ENCODE measurements at regions of chr17 and their contacts with region 1.

Region 1: GRCh38 chr17:56819431-56820145 is 14.1 kb downstream of the C17orf67 start:
- DNase-seq: peak; percentile 83
- H3K4me3 Mint-ChIP-seq: no peak overlapping the region
- H3K27ac Mint-ChIP-seq: no peak overlapping the region
- H3K4me1 Mint-ChIP-seq: peaks cover 27% of the 10 kb centered on the region
- H3K27me3 Mint-ChIP-seq: no peaks in the 10 kb centered on the region

Region 2: GRCh38 chr17:56715613-56716357 is 103.8 kb before region 1 on chr17:
- CTCF ChIA-PET with region 1: no interaction called
- POLR2A ChIA-PET with region 1: no interaction called
- intact Hi-C with region 1: no loop called
- DNase-seq: peak; percentile 83
- H3K4me3 Mint-ChIP-seq: no peak overlapping the region
- H3K27ac Mint-ChIP-seq: no peak overlapping the region
- H3K4me1 Mint-ChIP-seq: peaks cover 3% of the 10 kb centered on the region
- H3K27me3 Mint-ChIP-seq: peaks cover 5% of the 10 kb centered on the region

Region 3: DNA sequence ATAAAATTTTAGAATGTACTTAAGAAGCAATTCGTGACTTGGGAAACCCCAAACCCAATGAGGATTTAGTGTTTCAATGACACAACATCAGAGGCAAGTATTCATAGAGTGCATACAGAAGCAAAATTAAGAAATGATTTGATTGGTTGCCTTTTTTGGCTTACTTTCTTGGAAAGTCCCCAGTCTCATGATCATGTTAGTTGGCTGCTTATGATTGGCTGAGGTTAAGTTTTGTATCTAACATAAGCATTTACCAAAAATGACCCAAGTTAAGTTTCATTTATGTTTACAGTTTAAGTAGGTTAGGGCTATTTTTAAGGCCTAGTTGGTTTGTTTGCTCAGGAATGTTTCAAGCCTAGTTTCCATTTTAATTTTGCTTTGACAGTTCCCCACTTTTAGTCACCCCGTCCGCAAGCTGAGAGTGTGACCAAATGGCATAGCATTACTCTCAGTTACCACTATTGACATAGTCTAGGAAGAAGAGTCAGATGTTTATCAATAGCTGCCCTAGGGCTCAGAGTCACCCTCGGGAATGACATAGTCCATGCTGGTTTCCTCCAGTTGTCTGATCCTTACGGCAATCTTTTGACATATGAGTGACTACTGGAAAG is 50.6 kb after region 1 on chr17:
- CTCF ChIA-PET with region 1: interaction called, 11 read pairs
- POLR2A ChIA-PET with region 1: no interaction called
- intact Hi-C with region 1: no loop called
- DNase-seq: peak; percentile 45
- H3K4me3 Mint-ChIP-seq: no peak overlapping the region
- H3K27ac Mint-ChIP-seq: peak overlapping the region; percentile 64
- H3K4me1 Mint-ChIP-seq: peaks cover 9% of the 10 kb centered on the region
- H3K27me3 Mint-ChIP-seq: peaks cover 3% of the 10 kb centered on the region

Region 4: DNA sequence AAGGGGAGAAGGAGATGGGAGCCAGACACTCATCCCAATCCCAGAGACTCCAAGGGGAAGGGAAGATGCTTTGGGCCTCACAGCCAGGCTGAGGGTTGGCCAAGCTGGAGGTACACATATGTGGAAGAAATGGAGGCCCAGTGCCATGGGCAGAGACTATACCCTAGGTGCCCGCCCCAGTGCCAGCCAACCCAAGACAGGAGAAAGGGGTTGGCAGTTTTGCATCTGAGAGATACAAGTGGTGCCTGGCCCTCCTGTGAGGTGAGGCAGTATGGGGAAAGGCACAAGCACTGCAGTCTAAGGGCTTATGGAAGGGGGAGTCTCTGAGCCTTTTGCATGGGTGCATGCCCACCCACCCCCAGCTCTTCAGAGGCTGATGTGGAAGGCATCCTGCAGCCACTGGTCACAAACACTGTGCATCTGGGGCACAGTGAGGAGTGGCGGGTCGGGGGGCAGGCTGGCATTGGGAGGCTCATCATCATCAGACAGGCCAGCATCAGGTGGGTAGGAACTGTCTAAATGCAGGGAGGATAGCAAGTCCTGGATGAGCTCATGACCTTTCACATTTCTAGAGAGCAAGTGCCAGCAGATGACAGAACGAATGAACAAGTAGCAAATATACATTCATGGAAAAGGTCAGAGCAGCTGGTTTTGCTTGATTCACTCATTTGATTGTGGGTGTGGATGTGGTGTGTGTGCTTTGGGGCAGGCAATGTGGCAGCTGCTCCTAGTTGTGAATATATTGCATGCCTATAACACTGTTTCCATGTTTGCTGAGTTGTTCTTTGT is 64.9 kb after region 1 on chr17:
- CTCF ChIA-PET with region 1: no interaction called
- POLR2A ChIA-PET with region 1: no interaction called
- intact Hi-C with region 1: no loop called
- DNase-seq: no peak
- H3K4me3 Mint-ChIP-seq: no peak overlapping the region
- H3K27ac Mint-ChIP-seq: no peak overlapping the region
- H3K4me1 Mint-ChIP-seq: no peaks in the 10 kb centered on the region
- H3K27me3 Mint-ChIP-seq: no peaks in the 10 kb centered on the region

Region 5: DNA sequence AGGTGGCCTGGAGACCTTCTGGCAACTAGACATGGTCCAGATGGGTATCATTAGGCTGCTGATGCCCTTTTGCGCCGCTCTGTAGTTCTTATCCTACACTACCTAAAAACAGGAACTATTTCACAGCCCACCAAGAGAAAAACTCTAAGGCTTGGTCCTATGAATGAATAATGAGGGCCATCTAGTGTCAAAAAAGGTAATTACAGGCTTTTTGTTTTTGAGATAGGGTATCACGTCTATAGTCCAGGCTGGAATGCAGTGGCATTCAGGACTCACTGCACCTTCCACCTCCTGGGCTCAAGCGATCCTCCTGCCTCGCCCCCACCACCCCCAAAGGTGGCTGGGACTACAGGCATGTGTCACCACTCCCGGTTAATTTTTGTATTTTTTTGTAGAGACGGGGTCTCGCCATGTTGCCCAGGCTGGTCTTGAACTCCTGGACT is 120.3 kb after region 1 on chr17:
- CTCF ChIA-PET with region 1: interaction called, 85 read pairs
- POLR2A ChIA-PET with region 1: no interaction called
- intact Hi-C with region 1: loop called (anchors 1 kb)
- DNase-seq: no peak
- H3K4me3 Mint-ChIP-seq: no peak overlapping the region
- H3K27ac Mint-ChIP-seq: no peak overlapping the region
- H3K4me1 Mint-ChIP-seq: peaks cover 13% of the 10 kb centered on the region
- H3K27me3 Mint-ChIP-seq: no peaks in the 10 kb centered on the region

Region 6: DNA sequence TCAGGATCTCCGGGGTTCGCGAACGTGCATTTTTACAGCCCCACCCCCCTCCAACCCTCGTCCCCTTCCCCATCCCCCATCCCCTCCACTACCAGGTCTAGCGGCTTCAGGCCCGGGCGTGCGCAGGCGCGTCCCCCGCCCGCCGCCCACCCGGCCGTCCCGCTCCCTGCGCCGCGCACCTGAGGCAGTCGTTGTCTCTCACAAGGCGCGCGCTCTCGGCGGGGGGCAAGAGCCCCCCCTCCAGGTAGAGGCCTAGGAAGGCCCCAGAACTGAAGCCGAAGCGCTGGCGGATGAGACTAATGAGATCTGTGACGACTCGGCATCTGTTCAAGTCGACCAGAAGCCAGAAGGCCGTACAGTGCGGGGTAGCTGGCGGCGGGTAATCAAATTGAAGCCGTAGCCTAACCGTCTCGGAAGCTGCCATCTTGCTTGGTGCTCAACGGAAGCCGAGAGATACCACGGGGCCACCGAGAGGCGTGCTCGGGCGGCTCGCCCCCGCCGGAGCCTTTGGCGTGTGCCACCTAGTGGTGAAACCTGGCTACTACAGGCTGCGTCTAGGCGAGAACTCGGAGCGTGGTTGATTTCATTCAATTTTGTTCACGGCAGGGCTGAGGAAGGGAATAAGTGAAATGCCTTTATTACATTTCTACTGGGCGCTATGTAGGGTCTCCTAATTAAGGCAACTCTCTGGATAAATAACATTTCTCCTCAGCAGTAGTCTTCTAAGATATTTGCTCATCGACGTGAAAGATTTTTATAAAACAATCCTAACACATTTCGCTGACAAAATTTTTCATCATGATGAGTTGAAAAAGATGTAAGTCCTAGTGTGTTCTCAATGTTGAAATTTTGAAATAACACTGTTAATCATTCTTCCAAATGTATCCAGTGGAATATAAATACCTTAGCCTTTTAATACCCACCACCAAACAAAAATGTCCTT is 141.3 kb after region 1 on chr17 and contains the start of gene COIL:
- CTCF ChIA-PET with region 1: interaction called, 4 read pairs
- POLR2A ChIA-PET with region 1: no interaction called
- intact Hi-C with region 1: loop called (anchors 1 kb)
- DNase-seq: peak; percentile 95
- H3K4me3 Mint-ChIP-seq: peak within 1 kb of the TSS; percentile 80
- H3K27ac Mint-ChIP-seq: peak within 1 kb of the TSS; percentile 85
- H3K4me1 Mint-ChIP-seq: peaks cover 26% of the 10 kb centered on the region
- H3K27me3 Mint-ChIP-seq: no peaks in the 10 kb centered on the region
- total RNA-seq, gene COIL: 16.9 TPM